PC-9 (cell line): ENCODE measurements at regions of chr2 and their contacts with region 1.

Region 1: GRCh38 chr2:84905181-84906107 is at the start of gene TMSB10:
- DNase-seq: peak; percentile 62 to 90
- H3K4me3 ChIP-seq: peak within 1 kb of the TSS; percentile 97
- H3K27ac ChIP-seq: peak within 1 kb of the TSS; percentile 80
- H3K4me1 ChIP-seq: peaks cover 21% of the 10 kb centered on the region
- H3K27me3 ChIP-seq: 0 out of 2 replicates have a peak, but pooled peaks cover 3% of the 10 kb centered on the region
- CTCF ChIP-seq: no peak
- total RNA-seq, gene TMSB10: 1,668 and 1,769 TPM in 2 replicates

Region 2: GRCh38 chr2:84393829-84394228 is 511.6 kb before region 1 on chr2:
- CTCF ChIA-PET with region 1: no interaction called
- POLR2A ChIA-PET with region 1: interaction called, 28 read pairs
- intact Hi-C with region 1: no loop called
- DNase-seq: no peak
- H3K4me3 ChIP-seq: no peak overlapping the region
- H3K27ac ChIP-seq: no peak overlapping the region
- H3K4me1 ChIP-seq: no peaks in the 10 kb centered on the region
- H3K27me3 ChIP-seq: peaks cover 2% of the 10 kb centered on the region; the same call in 1 of the 2 replicates
- CTCF ChIP-seq: no peak

Region 3: DNA sequence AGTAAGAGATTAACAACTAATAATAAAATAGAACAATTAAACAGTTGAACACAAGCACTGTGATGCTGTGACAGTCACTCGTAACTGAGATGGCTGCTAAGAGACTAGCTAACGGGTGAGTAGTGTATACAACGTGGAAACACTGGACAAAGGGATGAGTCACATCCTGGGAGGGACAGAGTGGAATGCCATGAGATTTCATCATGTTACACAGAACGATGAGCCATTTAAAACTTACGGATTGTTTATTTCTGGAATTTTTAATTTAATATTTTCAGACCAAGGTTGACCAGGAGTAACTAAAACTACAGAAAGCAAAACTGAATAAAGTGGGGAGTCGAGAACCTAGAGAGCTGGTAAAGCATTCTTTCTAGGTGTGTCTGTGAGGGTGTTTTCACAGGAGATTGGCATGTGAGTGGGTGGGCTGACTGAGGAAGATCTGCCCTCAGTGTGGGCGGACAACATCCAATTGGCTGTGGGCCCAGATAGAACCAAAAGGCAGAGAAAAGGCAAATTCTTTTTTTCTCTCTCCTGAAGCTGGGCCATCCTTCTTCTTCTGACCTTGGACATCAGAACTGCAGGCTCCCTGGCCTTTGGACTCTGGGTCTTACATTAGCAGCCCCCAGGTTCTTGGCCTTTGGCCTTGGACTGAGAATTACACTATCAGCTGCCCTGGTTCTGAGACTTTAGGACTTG is 14.6 kb after region 1 on chr2:
- CTCF ChIA-PET with region 1: interaction called, 7 read pairs
- POLR2A ChIA-PET with region 1: interaction called, 55 read pairs
- intact Hi-C with region 1: loop called (anchors 1 kb)
- DNase-seq: peak; percentile 56 to 88
- H3K4me3 ChIP-seq: peak overlapping the region; percentile 27; the same call in 1 of the 2 replicates
- H3K27ac ChIP-seq: peak overlapping the region; percentile 93
- H3K4me1 ChIP-seq: peaks cover 17% of the 10 kb centered on the region
- H3K27me3 ChIP-seq: no peaks in the 10 kb centered on the region
- CTCF ChIP-seq: no peak

Region 4: GRCh38 chr2:84958135-84959044 is 52.9 kb after region 1 on chr2:
- CTCF ChIA-PET with region 1: no interaction called
- POLR2A ChIA-PET with region 1: interaction called, 11 read pairs
- intact Hi-C with region 1: loop called (anchors 2 kb)
- DNase-seq: peak; percentile 88 to 98
- H3K4me3 ChIP-seq: peak overlapping the region; percentile 27; the same call in 1 of the 2 replicates
- H3K27ac ChIP-seq: peak overlapping the region; percentile 99
- H3K4me1 ChIP-seq: peaks cover 49% of the 10 kb centered on the region
- H3K27me3 ChIP-seq: no peaks in the 10 kb centered on the region
- CTCF ChIP-seq: no peak

Region 5: DNA sequence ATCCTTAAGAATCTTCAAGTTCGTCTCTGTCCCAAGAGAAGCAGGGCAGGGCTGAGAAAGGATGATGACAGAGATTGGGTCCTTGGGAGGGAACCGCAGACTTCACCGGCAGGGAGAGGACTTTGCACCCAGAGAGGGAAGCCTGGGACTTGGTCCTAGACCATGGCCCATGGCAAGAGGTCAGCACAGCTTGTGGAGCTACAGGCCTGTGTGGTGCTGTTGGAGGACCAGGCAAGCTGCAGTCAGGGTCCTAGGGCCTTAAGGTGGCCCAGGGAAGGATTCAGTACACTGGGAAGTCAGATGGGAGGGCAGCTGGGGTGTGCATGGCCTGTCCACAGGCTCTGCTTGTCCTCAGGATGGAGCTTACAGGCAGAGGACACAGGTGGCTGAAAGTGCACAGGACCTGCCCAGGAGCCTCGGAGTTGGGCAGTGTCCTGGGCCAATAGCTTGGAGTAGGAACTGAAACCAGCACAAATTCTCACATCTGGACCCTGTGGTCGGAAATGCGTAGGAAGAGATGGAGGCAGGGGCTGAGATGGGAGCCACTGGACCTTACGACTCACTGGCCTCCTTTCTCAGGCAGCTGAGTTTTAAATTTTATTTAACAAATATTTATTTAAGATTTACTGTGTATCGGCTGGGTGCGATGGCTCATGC is 171.3 kb after region 1 on chr2:
- CTCF ChIA-PET with region 1: interaction called, 11 read pairs
- POLR2A ChIA-PET with region 1: no interaction called
- intact Hi-C with region 1: no loop called
- DNase-seq: no peak
- H3K4me3 ChIP-seq: no peak overlapping the region
- H3K27ac ChIP-seq: no peak overlapping the region
- H3K4me1 ChIP-seq: no peaks in the 10 kb centered on the region
- H3K27me3 ChIP-seq: no peaks in the 10 kb centered on the region
- CTCF ChIP-seq: no peak